ENCODE measurements at regions of chr1 and their contacts with region 1.

Region 1: GRCh38 chr1:244864253-244865027 is at the start of gene HNRNPU:
- DNase-seq: peak; percentile 96
- H3K4me3 ChIP-seq: peak within 1 kb of the TSS; percentile 90
- H3K27ac ChIP-seq: peak within 1 kb of the TSS; percentile 100
- H3K4me1 ChIP-seq: peaks cover 9% of the 10 kb centered on the region
- H3K27me3 ChIP-seq: no peaks in the 10 kb centered on the region
- CTCF ChIP-seq: no peak
- total RNA-seq, gene HNRNPU: 218 to 370 TPM

Region 2: GRCh38 chr1:244835276-244836134 is 28.9 kb before region 1 on chr1 and contains the start of gene COX20:
- intact Hi-C with region 1: loop called (anchors 2 kb)
- DNase-seq: peak; percentile 92
- H3K4me3 ChIP-seq: peak within 1 kb of the TSS; percentile 46
- H3K27ac ChIP-seq: peak within 1 kb of the TSS; percentile 99
- H3K4me1 ChIP-seq: no peaks in the 10 kb centered on the region
- H3K27me3 ChIP-seq: no peaks in the 10 kb centered on the region
- CTCF ChIP-seq: no peak
- total RNA-seq, gene COX20: 26.1 to 31.5 TPM

Region 3: GRCh38 chr1:244970661-244971551 is 106.5 kb after region 1 on chr1:
- intact Hi-C with region 1: loop called (anchors 2 kb)
- DNase-seq: peak; percentile 94
- H3K4me3 ChIP-seq: peak overlapping the region; percentile 42
- H3K27ac ChIP-seq: peak overlapping the region; percentile 95
- H3K4me1 ChIP-seq: no peaks in the 10 kb centered on the region
- H3K27me3 ChIP-seq: no peaks in the 10 kb centered on the region
- CTCF ChIP-seq: peak; percentile 50

Region 4: GRCh38 chr1:245528258-245528635 is 663.8 kb after region 1 on chr1:
- intact Hi-C with region 1: no loop called
- DNase-seq: no peak
- H3K4me3 ChIP-seq: no peak overlapping the region
- H3K27ac ChIP-seq: no peak overlapping the region
- H3K4me1 ChIP-seq: no peaks in the 10 kb centered on the region
- H3K27me3 ChIP-seq: no peaks in the 10 kb centered on the region
- CTCF ChIP-seq: no peak

Measured in colonic mucosa (tissue), 4 donors.